Activated CD8-positive, alpha-beta T cell treated with anti-CD3 and anti-CD28 coated beads, Interleukin-2, amount 10 ng/mL, durations not matched to agents 7 days and 5 days (primary cell): ENCODE measurements at regions of chr19 and their contacts with region 1.

Region 1: DNA sequence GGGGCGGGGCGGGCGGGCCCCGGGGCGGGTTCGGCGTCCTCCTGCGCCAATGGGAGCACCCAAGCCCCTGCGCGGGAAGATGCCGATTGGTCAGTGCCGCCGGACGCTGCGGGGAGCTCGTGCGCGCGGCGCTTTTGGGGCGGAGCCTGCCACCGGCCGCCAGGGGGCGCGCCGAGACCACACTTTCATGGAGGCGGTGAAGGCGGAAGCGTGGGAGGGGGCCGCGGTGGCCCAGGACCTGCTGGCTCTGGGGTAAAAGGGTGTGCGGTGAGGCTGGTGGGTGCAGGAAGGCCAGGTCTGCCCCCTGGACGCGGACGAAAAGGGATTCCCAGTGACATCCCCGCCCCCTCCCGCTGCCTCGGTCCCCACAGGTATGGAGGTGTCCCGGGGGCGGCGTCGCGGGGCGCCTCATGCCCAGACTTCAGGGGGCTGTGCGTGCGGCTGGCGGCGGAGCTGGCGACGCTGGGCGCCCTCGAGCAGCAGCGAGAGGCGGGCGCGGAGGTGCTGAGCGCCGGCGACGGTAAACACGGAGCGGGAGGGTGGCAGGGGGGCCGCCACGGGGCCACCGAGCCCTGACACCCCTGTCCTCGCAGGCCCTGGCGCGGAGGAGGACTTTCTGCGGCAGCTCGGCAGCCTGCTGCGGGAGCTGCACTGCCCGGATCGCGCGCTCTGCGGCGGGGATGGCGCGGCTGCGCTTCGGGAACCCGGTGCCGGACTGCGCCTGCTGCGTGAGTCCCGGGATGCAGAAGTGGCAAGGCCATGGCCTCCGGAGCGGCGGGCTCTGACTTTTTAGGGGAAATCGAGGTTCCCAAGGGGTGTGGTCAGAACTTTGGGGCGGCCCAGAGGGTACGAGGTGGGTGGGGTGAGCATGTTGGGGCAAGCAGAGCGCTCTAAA is at the start of gene FAM98C:
- DNase-seq: peak; percentile 96
- ATAC-seq: peak; percentile 99
- H3K4me3 Mint-ChIP-seq: peak within 1 kb of the TSS; percentile 84
- H3K27ac Mint-ChIP-seq: peak within 1 kb of the TSS; percentile 93
- H3K4me1 Mint-ChIP-seq: peaks cover 26% of the 10 kb centered on the region
- H3K27me3 Mint-ChIP-seq: peaks cover 5% of the 10 kb centered on the region
- total RNA-seq, gene FAM98C: 21.0 to 25.9 TPM

Region 2: GRCh38 chr19:38173291-38174041 is 229.7 kb before region 1 on chr19:
- CTCF ChIA-PET with region 1: no interaction called
- POLR2A ChIA-PET with region 1: no interaction called
- DNase-seq: no peak
- ATAC-seq: no peak
- H3K4me3 Mint-ChIP-seq: no peak overlapping the region
- H3K27ac Mint-ChIP-seq: no peak overlapping the region
- H3K4me1 Mint-ChIP-seq: no peaks in the 10 kb centered on the region
- H3K27me3 Mint-ChIP-seq: no peaks in the 10 kb centered on the region

Region 3: GRCh38 chr19:38387550-38388348 is 15.5 kb before region 1 on chr19 and contains the start of gene GGN:
- CTCF ChIA-PET with region 1: interaction called, 26 read pairs
- POLR2A ChIA-PET with region 1: interaction called, 10 read pairs
- DNase-seq: peak; percentile 77
- ATAC-seq: peak; percentile 78
- H3K4me3 Mint-ChIP-seq: peak within 1 kb of the TSS; percentile 70
- H3K27ac Mint-ChIP-seq: peak within 1 kb of the TSS; percentile 46
- H3K4me1 Mint-ChIP-seq: peaks cover 19% of the 10 kb centered on the region
- H3K27me3 Mint-ChIP-seq: peaks cover 37% of the 10 kb centered on the region
- total RNA-seq, gene GGN: not detected

Region 4: GRCh38 chr19:38425810-38426466 is 22.7 kb after region 1 on chr19 and contains the start of gene RASGRP4:
- CTCF ChIA-PET with region 1: interaction called, 20 read pairs
- POLR2A ChIA-PET with region 1: interaction called, 7 read pairs
- DNase-seq: peak; percentile 54
- ATAC-seq: peak; percentile 42
- H3K4me3 Mint-ChIP-seq: peak within 1 kb of the TSS; percentile 52
- H3K27ac Mint-ChIP-seq: peak within 1 kb of the TSS; percentile 34
- H3K4me1 Mint-ChIP-seq: peaks cover 21% of the 10 kb centered on the region
- H3K27me3 Mint-ChIP-seq: peaks cover 3% of the 10 kb centered on the region
- total RNA-seq, gene RASGRP4: 0.42 to 0.50 TPM

Region 5: DNA sequence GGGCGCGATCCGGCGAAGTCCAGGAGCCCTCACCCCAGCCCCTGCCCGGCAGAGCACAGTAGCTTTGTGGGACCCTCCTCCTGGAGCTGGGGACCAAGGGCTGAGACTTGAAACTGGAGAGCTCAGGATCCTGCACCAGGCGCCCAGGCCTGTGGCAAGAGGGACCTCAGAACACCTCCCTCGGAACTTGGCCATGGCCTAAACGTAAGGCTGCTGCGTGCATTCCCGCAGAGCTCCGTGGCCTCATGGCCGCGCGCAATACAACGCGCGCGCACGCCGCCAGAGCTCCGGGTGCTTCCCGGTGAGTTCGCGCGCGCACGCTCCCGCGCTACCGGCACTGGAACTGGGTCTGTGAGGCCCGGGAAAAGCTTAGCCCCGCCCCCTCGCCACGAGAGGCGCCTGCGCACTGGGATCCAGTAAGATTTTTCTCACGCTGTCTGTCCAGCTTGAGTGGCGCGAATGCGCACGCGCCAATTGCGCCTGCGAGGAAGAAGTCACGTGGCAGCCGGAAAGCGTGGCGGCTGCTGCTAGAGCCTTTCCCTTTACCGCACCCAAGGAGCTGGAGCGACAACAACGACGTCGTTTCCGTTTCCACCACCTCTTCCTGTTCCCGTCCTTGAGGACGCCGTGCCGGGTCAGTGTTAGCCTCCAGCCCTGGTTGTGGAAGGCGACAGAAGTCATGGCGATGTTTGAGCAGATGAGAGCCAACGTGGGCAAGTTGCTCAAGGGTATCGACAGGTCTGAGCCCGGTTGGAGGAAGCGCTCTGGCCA is 215.6 kb after region 1 on chr19 and contains the start of gene EIF3K:
- CTCF ChIA-PET with region 1: interaction called, 22 read pairs
- POLR2A ChIA-PET with region 1: no interaction called
- DNase-seq: peak; percentile 98
- ATAC-seq: peak; percentile 58
- H3K4me3 Mint-ChIP-seq: peak within 1 kb of the TSS; percentile 100
- H3K27ac Mint-ChIP-seq: peak within 1 kb of the TSS; percentile 99
- H3K4me1 Mint-ChIP-seq: peaks cover 53% of the 10 kb centered on the region
- H3K27me3 Mint-ChIP-seq: no peaks in the 10 kb centered on the region
- total RNA-seq, gene EIF3K: 325 to 352 TPM

Region 6: GRCh38 chr19:38647368-38647965 is 244.3 kb after region 1 on chr19 and contains the start of gene ACTN4:
- CTCF ChIA-PET with region 1: interaction called, 14 read pairs
- POLR2A ChIA-PET with region 1: no interaction called
- DNase-seq: peak; percentile 100
- ATAC-seq: peak; percentile 92
- H3K4me3 Mint-ChIP-seq: peak within 1 kb of the TSS; percentile 95
- H3K27ac Mint-ChIP-seq: peak within 1 kb of the TSS; percentile 88
- H3K4me1 Mint-ChIP-seq: peaks cover 50% of the 10 kb centered on the region
- H3K27me3 Mint-ChIP-seq: no peaks in the 10 kb centered on the region
- total RNA-seq, gene ACTN4: 357 to 373 TPM

Region 7: GRCh38 chr19:38952395-38953165 is 549.4 kb after region 1 on chr19:
- CTCF ChIA-PET with region 1: interaction called, 10 read pairs
- POLR2A ChIA-PET with region 1: no interaction called
- DNase-seq: peak; percentile 64
- ATAC-seq: peak; percentile 39
- H3K4me3 Mint-ChIP-seq: no peak overlapping the region
- H3K27ac Mint-ChIP-seq: no peak overlapping the region
- H3K4me1 Mint-ChIP-seq: peaks cover 14% of the 10 kb centered on the region
- H3K27me3 Mint-ChIP-seq: peaks cover 24% of the 10 kb centered on the region